HEK293 (cell line): ENCODE measurements at regions of chr16 and their contacts with region 1.

Region 1: DNA sequence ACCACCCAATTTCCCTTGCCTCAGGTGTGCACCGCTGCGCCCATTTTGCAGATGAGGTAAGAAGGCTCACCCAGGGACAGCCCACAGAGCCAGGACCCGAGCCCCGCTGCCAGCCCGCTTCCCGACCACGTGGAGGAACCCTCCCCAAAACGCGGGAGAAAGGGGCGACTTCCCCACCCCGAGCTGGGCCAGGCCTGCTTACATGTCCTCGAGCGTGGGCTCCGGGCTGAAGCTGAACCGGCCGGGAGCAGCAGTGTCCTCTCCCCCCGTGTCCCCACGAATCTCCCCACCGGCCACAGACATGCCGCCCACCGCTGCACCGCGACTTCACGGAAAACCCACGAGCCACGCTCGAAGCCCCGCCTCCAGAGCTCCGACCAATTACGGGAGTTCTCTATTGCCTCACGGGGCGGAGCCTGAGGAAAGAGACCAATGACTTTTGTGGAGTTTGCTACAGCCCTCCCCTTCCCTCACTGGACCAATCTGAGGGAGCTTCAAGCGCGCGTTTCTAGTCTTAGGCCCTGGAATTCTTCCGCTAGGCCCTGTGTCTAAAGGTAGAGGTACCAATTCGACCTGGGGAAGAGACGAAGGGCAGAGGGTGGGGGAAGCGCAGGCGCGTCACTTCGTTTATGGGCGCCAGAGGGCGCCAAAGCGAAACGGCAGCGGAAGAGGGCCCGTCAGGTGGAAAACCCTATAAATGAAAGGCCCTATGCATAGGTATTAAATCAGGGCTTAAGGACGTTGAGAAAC is at the start of gene DCTPP1:
- H3K4me3 ChIP-seq: peak within 1 kb of the TSS; percentile 76
- H3K27ac ChIP-seq: peak within 1 kb of the TSS; percentile 12; the same call in 1 of the 2 replicates
- H3K4me1 ChIP-seq: no peaks in the 10 kb centered on the region
- CTCF ChIP-seq: peak; percentile 99

Region 2: DNA sequence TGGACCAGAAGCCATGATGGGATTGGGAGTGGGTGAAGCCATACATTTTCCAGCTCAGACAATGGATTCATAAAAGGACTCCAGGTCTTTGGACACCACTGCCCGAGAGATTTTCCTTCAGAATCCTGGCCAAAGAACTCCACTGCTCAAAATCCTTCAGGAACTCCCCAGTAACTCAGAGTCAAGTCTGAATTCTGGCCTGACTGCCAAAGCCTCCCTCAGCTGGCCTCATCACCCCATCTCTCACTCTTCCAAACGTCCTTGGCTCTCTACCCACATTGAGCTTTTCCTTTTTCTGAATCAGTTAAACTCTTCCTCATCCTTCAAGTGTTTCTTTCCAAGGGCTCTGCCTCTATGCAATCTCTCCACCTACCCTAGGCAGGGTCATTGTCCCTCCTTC is 46.3 kb before region 1 on chr16:
- CTCF ChIA-PET with region 1: no interaction called
- POLR2A ChIA-PET with region 1: no interaction called
- H3K4me3 ChIP-seq: no peak overlapping the region
- H3K27ac ChIP-seq: no peak overlapping the region
- H3K4me1 ChIP-seq: no peaks in the 10 kb centered on the region
- CTCF ChIP-seq: no peak

Region 3: DNA sequence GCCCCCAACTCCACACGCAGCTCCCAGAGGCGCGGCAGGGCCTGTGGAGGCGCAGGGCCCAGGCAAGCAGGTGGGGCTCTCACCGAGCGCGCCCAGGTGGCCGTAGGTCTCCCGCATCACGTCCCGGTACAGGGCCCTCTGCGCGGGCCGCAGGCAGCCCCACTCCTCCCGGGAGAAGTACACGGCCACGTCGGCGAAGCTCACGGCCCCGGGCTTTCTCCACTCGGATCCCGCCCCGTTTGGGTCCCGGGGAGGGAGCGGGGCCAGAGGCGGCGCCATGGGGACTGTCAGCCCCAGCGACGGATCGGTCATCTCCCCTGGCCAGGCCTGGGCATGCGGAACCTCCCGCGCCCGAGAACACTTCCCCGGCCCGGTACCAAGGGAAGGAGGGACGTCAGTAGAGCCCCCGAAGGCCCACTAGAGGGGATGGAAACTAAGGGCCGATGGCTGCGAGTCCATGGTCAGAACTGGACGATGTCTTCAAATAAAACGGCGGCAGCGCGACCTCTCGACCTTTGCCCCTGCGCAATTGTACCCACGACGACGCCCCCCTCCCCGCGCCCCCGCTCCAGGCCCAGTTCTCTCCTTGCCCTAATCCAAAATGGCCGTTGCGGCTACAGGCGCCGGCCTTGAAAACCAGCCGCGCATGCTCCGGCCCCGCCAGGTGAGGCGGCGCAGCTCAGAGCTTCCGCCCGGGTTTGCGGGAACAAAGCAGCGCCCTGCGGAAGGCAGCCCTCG is 104.7 kb after region 1 on chr16 and contains the start of gene ZNF747:
- CTCF ChIA-PET with region 1: interaction called, 9 read pairs
- POLR2A ChIA-PET with region 1: interaction called, 15 read pairs
- H3K4me3 ChIP-seq: peak within 1 kb of the TSS; percentile 59
- H3K27ac ChIP-seq: peak within 1 kb of the TSS; percentile 91
- H3K4me1 ChIP-seq: peaks cover 2% of the 10 kb centered on the region; the same call in 1 of the 2 replicates
- CTCF ChIP-seq: peak; percentile 75

Region 4: GRCh38 chr16:30602616-30603277 is 172.9 kb after region 1 on chr16:
- CTCF ChIA-PET with region 1: interaction called, 10 read pairs
- POLR2A ChIA-PET with region 1: interaction called, 6 read pairs
- H3K4me3 ChIP-seq: no peak overlapping the region
- H3K27ac ChIP-seq: no peak overlapping the region
- H3K4me1 ChIP-seq: no peaks in the 10 kb centered on the region
- CTCF ChIP-seq: no peak

Region 5: GRCh38 chr16:30621765-30622164 is 191.9 kb after region 1 on chr16:
- CTCF ChIA-PET with region 1: interaction called, 43 read pairs
- POLR2A ChIA-PET with region 1: interaction called, 3 read pairs
- H3K4me3 ChIP-seq: no peak overlapping the region
- H3K27ac ChIP-seq: no peak overlapping the region
- H3K4me1 ChIP-seq: no peaks in the 10 kb centered on the region
- CTCF ChIP-seq: no peak

Region 6: GRCh38 chr16:30637942-30638341 is 208.1 kb after region 1 on chr16:
- CTCF ChIA-PET with region 1: interaction called, 10 read pairs
- POLR2A ChIA-PET with region 1: interaction called, 11 read pairs
- H3K4me3 ChIP-seq: no peak overlapping the region
- H3K27ac ChIP-seq: no peak overlapping the region
- H3K4me1 ChIP-seq: 0 out of 2 replicates have a peak, but pooled peaks cover 2% of the 10 kb centered on the region
- CTCF ChIP-seq: peak; percentile 75